ENCODE measurements at regions of chr19 and their contacts with region 1.

Region 1: DNA sequence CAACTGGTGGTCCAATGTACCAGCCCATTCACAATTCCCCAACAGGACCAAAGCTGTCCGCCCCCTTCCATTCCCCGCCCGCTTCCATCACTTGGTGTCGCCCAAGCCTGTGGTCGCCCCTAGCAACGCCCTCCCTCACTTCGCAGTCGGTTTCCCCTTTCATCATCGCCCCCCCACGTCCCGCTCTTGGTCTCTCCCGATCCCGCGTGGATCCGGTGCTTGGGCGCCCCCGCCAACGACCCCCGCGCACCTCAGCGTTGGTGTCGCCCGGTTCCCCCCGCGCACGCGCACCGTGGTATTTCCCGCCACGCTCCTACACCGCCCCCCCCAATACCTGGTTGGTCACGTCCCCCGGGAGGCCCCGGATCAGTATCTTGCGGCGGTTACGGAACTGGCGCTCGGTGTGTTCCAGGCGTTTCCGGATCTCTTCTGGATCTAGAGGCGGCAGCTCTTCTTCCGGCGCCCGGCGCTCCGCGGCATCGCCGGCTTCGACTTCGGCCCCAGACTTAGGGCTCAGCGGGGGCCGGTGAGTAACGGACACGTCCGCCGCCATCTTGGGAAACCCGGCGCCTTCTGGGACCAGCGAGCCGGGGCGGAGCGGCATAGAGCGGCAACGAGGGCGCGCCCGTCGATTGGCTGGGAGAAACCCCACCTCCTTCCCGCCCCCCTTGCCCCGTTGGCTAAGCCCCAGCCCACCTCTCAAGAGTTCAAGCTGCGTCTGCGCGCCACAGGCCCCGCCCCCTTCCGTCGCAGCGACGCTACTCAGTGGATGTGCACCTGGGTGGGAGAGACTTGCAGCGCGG is at the start of gene RAVER1:
- DNase-seq: peak; percentile 97 to 99
- H3K4me3 ChIP-seq: peak within 1 kb of the TSS; percentile 65
- CTCF ChIP-seq: no peak
- POLR2A ChIP-seq: no peak
- total RNA-seq, gene RAVER1: 14.2 to 22.5 (median 19.2) TPM

Region 2: DNA sequence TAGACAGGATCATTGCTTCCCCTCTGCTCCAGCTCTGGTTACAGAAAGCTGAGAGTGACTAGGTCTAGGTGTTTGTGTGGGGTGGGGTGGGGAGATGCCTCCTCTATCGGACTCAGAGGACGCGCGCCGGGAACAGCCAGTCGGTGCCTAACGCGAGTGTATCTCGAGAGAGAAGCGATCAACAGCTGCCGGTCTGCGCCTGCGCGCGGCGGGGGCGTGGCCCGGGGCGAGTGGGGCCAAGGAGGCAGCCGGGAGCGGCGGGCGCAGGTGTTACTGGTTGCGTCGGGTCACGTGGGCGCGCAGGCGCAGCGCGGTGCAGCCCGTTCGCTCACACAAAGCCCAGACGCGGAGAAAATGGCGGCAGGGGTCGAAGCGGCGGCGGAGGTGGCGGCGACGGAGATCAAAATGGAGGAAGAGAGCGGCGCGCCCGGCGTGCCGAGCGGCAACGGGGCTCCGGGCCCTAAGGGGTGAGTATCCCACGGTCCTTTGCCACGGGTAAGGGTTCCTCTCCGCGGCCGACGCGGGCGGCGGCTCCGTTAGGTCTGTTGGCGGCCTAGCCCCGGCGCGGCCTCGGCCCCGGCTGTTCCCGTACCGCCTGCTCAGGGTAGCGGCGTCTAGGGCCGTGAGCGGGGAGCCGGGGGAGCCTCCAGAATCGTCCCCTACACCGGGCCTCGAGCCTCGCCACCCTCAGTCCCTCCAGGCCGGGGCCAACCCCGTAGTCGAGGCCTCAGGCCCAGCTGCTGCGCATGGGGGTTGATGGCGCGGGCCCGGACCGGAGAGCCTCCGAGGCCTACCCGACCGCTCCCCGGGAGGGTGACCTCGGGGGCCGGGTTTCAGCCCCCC is 1888.3 kb before region 1 on chr19 and contains the start of gene HNRNPM:
- intact Hi-C with region 1: loop called (anchors 5 kb)
- DNase-seq: peak; percentile 99 to 100
- H3K4me3 ChIP-seq: peak within 1 kb of the TSS; percentile 96
- CTCF ChIP-seq: peak in 1 of 3 donors; percentile 6
- POLR2A ChIP-seq: peak in 1 of 2 donors; percentile 78
- total RNA-seq, gene HNRNPM: 60.4 to 103 (median 79.7) TPM

Measured in lower leg skin (tissue), 4 donors.